ENCODE measurements at regions of chr7 and their contacts with region 1.

Region 1: GRCh38 chr7:107874605-107875446 is 16.2 kb upstream of the DLD start:
- DNase-seq: peak; percentile 43 to 64 (median 48)
- ATAC-seq: peak; percentile 86
- H3K4me3 ChIP-seq: no peak overlapping the region
- H3K27ac ChIP-seq: no peak overlapping the region
- H3K4me1 ChIP-seq: peaks cover 4% of the 10 kb centered on the region
- H3K27me3 ChIP-seq: no peaks in the 10 kb centered on the region
- CTCF ChIP-seq: peak; percentile 58 to 87 (median 74)
- POLR2A ChIP-seq: no peak

Region 2: GRCh38 chr7:107743567-107744344 is 131.1 kb before region 1 on chr7 and contains the start of gene CBLL1:
- intact Hi-C with region 1: loop called (anchors 5 kb)
- DNase-seq: peak; percentile 95 to 97 (median 97)
- ATAC-seq: peak; percentile 97
- H3K4me3 ChIP-seq: peak within 1 kb of the TSS; percentile 62 to 85
- H3K27ac ChIP-seq: peak within 1 kb of the TSS; percentile 83 to 99 (median 93)
- H3K4me1 ChIP-seq: peaks cover 32% of the 10 kb centered on the region
- H3K27me3 ChIP-seq: no peaks in the 10 kb centered on the region
- CTCF ChIP-seq: peak; percentile 67 to 95 (median 93)
- POLR2A ChIP-seq: peak; percentile 47 to 80 (median 80)
- total RNA-seq, gene CBLL1: 15.0 to 16.2 TPM